ENCODE measurements at regions of chr12 and their contacts with region 1.

Region 1: GRCh38 chr12:7806863-7807487 is 17.8 kb downstream of the NANOG start:
- DNase-seq: peak in 1 of 2 donors; percentile 73
- H3K4me3 ChIP-seq: no peak overlapping the region
- H3K27ac ChIP-seq: no peak overlapping the region
- H3K4me1 ChIP-seq: no peaks in the 10 kb centered on the region
- H3K27me3 ChIP-seq: no peaks in the 10 kb centered on the region
- CTCF ChIP-seq: peak; percentile 24 to 70 (median 57)

Region 2: GRCh38 chr12:7678738-7679137 is 128.2 kb before region 1 on chr12:
- intact Hi-C with region 1: loop called (anchors 10 kb)
- DNase-seq: no peak
- H3K4me3 ChIP-seq: no peak overlapping the region
- H3K27ac ChIP-seq: no peak overlapping the region
- H3K4me1 ChIP-seq: no peaks in the 10 kb centered on the region
- H3K27me3 ChIP-seq: no peaks in the 10 kb centered on the region
- CTCF ChIP-seq: no peak

Region 3: DNA sequence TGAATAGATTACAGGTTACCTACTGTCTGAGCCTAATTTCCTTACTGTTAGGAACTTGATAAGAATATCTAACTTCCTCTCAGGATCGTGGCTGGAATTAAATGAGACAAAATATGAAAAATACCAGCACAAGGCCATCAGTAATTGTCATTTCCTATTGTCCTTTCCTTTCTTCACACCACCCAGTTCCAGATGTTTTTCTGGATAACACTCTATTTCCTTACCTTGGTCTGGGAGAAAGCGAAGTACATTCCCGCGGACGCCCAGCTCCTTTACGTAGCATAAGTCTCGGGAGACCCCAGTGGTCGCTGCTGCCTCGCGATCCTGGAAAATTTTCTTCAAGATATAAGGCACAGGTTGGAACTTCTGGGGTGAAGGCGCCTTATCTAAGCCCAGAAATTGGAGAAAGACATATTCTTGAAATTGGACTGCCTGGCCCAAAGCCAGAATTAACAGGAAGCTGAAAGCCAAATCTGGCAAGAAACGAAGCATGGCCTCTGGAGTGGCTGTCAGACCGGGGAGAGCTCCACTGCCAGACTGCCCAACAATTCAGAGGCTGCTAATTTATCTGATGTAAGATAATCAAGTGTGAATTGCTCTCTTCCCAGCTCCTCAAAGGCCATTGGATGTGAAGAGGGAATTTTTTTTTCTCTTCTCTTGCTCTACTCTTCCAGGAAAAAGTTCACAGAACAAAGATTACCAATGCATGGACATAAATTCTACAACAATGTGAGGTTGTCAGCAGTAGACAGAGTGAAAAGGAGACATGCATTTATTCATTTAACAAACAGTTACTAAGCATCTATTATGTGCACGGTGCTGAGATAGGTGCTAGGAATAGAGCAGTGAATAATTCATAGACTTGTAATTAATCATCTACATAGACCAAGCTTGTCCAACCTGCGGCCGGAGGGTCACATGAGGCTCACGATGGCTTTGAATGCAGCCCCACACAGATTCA is 111.5 kb before region 1 on chr12 and contains the start of gene GDF3:
- intact Hi-C with region 1: no loop called
- DNase-seq: no peak
- H3K4me3 ChIP-seq: peak within 1 kb of the TSS in 1 of 2 donors; percentile 34
- H3K27ac ChIP-seq: no peak within 1 kb of the TSS
- H3K4me1 ChIP-seq: no peaks in the 10 kb centered on the region
- H3K27me3 ChIP-seq: no peaks in the 10 kb centered on the region
- CTCF ChIP-seq: no peak
- total RNA-seq, gene GDF3: not detected

Region 4: DNA sequence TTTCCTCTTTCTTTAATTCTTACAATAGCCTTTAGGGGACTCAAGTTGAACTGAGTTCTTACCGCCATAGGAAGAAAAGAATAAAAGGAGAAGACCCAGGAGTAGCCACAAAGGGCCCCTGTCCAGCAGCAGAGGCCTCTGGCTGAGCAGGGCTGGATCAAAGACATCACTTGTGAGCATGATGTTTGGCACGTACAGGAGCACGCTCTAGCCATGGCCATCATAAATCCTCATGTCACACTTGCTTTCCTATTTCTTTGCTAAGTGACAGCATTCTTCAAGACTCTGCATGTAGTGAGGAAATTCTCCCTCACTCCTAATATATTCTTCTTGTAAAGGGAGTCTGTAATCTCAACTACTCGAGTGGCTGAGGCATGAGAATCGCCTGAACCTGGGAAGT is 75.5 kb before region 1 on chr12:
- intact Hi-C with region 1: no loop called
- DNase-seq: no peak
- H3K4me3 ChIP-seq: no peak overlapping the region
- H3K27ac ChIP-seq: no peak overlapping the region
- H3K4me1 ChIP-seq: no peaks in the 10 kb centered on the region
- H3K27me3 ChIP-seq: no peaks in the 10 kb centered on the region
- CTCF ChIP-seq: no peak

Region 5: DNA sequence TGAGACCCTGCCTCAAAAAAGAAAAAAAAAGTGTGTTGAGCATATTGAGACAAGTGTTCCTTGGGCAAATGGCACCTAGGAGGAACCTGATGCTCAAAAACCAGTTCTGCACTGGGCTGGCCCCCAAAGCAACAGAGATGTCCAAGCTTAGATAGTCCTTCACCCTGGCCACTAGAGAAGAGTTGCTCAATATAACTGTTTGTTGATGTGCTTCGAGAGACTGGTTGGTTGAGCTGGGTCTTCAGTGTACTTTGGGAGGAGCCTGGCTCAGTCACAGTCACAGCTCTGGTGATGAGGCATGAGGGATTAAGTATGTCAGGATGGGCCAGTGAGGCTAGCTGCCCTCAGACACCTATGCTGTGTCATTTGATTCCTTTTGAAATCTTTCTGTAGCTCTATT is 27.7 kb after region 1 on chr12:
- intact Hi-C with region 1: no loop called
- DNase-seq: no peak
- H3K4me3 ChIP-seq: no peak overlapping the region
- H3K27ac ChIP-seq: no peak overlapping the region
- H3K4me1 ChIP-seq: no peaks in the 10 kb centered on the region
- H3K27me3 ChIP-seq: no peaks in the 10 kb centered on the region
- CTCF ChIP-seq: no peak

Region 6: GRCh38 chr12:7995266-7995963 is 188.4 kb after region 1 on chr12:
- intact Hi-C with region 1: no loop called
- DNase-seq: peak; percentile 60 to 89
- H3K4me3 ChIP-seq: no peak overlapping the region
- H3K27ac ChIP-seq: no peak overlapping the region
- H3K4me1 ChIP-seq: no peaks in the 10 kb centered on the region
- H3K27me3 ChIP-seq: no peaks in the 10 kb centered on the region
- CTCF ChIP-seq: peak; percentile 62 to 84 (median 74)

Measured in ascending aorta (tissue), 2 donors.